MCF 10A (cell line): ENCODE measurements at regions of chr10 and their contacts with region 1.

Region 1: DNA sequence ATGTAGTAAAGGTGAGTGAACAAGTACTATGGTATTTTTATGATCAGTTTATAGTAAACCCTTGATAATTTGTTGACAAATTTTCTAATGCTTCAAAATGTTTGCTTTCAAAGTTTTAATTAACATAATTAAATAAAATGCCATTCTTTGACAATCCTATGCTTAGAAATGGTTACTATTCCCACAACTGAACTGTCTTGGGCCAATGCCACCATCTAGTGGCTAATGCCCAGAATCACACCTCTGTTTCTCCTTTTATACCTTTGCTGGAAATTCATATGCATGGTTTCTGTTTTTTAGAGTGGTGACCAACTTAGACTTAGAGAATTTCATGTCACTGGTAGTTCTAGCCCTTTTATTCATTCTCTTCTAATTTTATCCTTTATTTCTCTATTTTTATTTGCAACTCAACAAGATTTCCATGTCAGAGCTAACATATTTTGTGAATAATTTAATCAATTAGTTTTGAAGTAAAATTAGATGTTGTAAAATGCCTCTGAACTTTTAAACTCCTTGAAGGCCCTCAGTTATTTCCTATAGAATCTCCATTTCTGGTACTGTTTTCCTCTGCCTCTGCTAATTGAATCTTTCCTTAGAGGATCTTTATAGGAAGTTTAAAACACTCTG is 31.1 kb downstream of the PCGF5 start:
- DNase-seq: peak; percentile 80
- H3K4me3 Mint-ChIP-seq: no peak overlapping the region
- H3K27ac Mint-ChIP-seq: no peak overlapping the region
- H3K4me1 Mint-ChIP-seq: no peaks in the 10 kb centered on the region
- H3K27me3 Mint-ChIP-seq: no peaks in the 10 kb centered on the region
- CTCF ChIP-seq: peak; percentile 92

Region 2: DNA sequence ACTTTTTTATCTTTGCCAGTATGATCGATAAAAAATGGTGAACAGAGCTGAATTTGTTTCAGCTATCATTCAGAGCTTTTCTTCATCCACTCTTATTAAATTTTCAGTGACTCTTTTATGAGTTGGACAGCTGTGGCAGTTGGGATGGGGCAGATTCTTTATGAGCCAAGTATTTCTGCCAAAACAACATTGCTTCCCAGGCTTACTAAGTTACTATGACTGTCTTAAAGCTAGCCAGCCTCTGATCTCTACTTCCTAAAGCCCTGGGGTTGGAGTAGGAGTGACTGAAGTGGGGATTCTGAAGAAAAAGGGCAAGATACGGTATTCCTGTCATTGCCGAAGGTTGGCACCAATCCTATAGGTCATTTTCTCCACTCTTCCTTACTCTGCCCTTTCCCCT is 367.1 kb before region 1 on chr10:
- CTCF ChIA-PET with region 1: interaction called, 6 read pairs
- POLR2A ChIA-PET with region 1: interaction called, 3 read pairs
- intact Hi-C with region 1: loop called (anchors 1 kb)
- DNase-seq: no peak
- H3K4me3 Mint-ChIP-seq: no peak overlapping the region
- H3K27ac Mint-ChIP-seq: peak overlapping the region; percentile 42
- H3K4me1 Mint-ChIP-seq: no peaks in the 10 kb centered on the region
- H3K27me3 Mint-ChIP-seq: no peaks in the 10 kb centered on the region
- CTCF ChIP-seq: no peak

Region 3: DNA sequence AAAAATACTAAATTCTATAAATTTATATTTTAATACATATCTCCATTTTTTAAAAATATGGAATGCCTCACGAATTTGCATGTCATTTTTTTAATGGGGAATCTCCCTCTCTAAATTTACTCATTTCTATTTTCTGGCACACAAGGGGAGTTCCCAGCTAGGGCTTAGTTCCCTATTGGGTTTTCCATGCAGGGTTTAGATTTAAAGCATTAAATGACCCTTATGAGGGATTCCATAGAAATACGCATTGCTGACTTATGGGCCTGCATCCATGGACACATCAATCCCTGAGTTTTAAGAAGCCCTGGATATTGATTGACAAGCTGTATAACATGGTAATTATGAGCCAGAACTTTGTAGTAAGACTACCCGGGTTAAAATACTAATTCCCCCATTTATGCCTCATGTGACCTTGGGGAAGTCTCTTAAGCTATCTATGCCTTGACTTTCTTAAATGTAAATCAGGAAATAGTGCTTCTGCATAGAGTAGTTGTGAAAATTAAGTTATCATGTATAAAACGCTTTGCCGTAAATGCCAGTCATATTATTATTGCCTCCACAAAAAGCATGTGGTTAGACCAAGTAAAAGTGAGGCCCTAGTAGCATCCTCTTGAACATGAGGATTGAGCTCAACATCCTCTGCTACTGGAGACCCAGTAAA is 251.9 kb before region 1 on chr10:
- CTCF ChIA-PET with region 1: interaction called, 96 read pairs
- POLR2A ChIA-PET with region 1: no interaction called
- intact Hi-C with region 1: no loop called
- DNase-seq: no peak
- H3K4me3 Mint-ChIP-seq: no peak overlapping the region
- H3K27ac Mint-ChIP-seq: no peak overlapping the region
- H3K4me1 Mint-ChIP-seq: no peaks in the 10 kb centered on the region
- H3K27me3 Mint-ChIP-seq: no peaks in the 10 kb centered on the region
- CTCF ChIP-seq: no peak

Region 4: GRCh38 chr10:91043173-91043910 is 208.2 kb before region 1 on chr10:
- CTCF ChIA-PET with region 1: interaction called, 76 read pairs
- POLR2A ChIA-PET with region 1: no interaction called
- intact Hi-C with region 1: loop called (anchors 1 kb)
- DNase-seq: peak; percentile 57
- H3K4me3 Mint-ChIP-seq: no peak overlapping the region
- H3K27ac Mint-ChIP-seq: no peak overlapping the region
- H3K4me1 Mint-ChIP-seq: peaks cover 6% of the 10 kb centered on the region
- H3K27me3 Mint-ChIP-seq: peaks cover 20% of the 10 kb centered on the region
- CTCF ChIP-seq: peak; percentile 54

Region 5: DNA sequence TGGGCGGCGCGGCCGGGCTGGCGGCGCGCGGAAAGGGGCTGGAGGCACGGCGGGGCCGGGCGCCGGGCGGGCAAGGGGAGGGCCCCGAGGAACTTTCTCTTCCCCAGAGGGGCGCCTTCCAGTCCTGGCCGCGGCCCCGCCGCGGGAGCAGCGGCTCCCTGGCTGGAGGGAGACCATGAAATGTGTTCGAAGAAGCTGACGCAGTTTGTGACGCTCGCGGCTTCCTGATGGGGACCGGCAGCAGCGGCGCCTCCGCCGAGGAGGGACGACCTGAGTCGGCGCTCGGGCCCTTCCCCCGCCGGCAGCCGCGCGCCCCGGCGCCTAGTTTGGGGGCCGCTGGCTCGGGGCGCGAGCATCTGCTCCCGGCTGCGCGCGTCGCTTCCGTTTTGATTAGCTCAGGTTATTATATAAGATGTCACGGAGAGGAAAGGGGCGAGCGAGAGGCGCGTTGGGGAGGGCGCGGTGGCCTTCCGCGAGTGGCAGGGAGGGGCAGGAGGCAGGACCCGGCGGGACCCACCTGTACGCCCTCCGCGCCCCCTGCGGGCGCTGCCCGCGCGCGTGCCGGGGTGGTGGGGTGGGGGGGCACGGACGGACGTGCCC is 88.2 kb before region 1 on chr10:
- CTCF ChIA-PET with region 1: interaction called, 4 read pairs
- POLR2A ChIA-PET with region 1: interaction called, 10 read pairs
- intact Hi-C with region 1: loop called (anchors 1 kb)
- DNase-seq: peak; percentile 56
- H3K4me3 Mint-ChIP-seq: peak overlapping the region; percentile 80
- H3K27ac Mint-ChIP-seq: peak overlapping the region; percentile 64
- H3K4me1 Mint-ChIP-seq: peaks cover 13% of the 10 kb centered on the region
- H3K27me3 Mint-ChIP-seq: no peaks in the 10 kb centered on the region
- CTCF ChIP-seq: no peak